ENCODE measurements at regions of chr16 and their contacts with region 1.

Region 1: DNA sequence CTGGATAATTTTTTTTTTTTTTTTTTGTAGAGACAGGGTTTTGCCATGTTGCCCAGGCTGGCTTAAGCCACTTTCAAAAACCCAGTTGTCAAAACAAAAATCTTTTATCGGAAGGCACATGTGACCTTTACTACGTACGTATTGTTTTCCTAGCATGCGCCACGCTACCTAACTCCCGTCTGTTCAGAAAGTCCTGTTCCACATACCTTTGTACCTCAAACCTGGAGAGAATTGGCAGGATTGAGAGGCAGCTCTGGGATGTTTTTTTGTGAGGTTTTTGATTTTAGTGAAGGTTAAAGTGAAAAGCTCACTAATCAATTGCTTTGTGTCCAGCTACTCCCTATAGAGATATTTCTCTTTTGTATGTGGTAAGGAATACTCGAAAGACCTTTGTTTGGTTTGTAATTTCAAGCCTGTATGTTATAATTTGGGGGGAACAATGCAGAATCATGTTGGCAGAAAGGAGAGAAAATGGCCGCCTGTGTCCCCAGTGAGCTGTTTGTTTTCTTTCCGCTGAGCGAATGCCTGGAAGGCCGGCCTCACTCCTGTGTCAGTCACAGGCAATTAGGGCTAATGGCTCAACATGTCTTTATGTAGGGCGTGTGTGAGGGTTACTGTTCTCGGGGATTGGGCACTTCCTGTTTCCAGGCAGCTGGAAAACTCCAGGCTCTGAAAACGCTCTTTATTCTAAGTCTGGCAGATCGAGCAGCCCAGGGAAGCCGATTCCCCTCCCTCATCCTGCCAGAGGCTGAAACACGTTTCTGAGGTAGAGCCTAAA is 60.8 kb upstream of the CLEC18A start:
- DNase-seq: peak; percentile 50 to 95 (median 86)
- H3K4me3 ChIP-seq: peak overlapping the region in 20 of 59 donors; percentile 2 to 35 (median 22)
- H3K27ac ChIP-seq: peak overlapping the region; percentile 91 to 100 (median 98)
- H3K27me3 ChIP-seq: no peaks in the 10 kb centered on the region
- CTCF ChIP-seq: peak in 19 of 56 donors; percentile 5 to 32 (median 19)

Region 2: DNA sequence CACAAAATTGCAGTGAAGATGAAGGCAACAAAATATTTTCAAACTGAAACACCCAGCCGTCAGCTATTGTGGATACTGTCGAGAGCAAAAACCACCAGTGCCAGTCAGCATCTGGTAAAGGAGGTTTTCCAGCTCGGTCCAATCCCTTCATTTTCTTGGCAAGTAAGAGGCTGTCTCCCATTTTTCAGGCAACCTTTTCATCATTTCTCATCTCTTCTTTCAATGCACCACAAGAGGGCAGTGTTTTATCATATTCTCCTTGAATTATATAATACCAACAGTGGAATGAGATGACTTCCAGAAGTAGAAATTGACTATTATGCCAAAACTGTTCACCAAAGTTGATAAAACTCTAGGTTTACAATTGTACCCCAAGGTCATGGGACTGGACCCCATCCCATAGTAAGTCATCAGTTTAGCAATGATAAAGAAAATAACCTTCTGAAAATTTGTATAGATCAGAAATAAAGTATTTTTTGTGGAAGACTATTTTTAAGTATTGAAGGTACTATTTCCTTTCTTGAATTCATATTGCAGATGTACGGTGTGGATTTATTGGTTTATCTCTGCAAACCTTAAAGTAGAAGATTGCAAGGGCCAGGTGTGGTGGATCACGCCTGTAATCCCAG is 180.7 kb before region 1 on chr16:
- intact Hi-C with region 1: no loop called
- DNase-seq: no peak
- H3K4me3 ChIP-seq: peak overlapping the region in 1 of 59 donors; percentile 26
- H3K27ac ChIP-seq: peak overlapping the region in 57 of 59 donors; percentile 1 to 87 (median 72)
- H3K27me3 ChIP-seq: no peaks in the 10 kb centered on the region
- CTCF ChIP-seq: peak; percentile 69 to 93 (median 86)

Region 3: DNA sequence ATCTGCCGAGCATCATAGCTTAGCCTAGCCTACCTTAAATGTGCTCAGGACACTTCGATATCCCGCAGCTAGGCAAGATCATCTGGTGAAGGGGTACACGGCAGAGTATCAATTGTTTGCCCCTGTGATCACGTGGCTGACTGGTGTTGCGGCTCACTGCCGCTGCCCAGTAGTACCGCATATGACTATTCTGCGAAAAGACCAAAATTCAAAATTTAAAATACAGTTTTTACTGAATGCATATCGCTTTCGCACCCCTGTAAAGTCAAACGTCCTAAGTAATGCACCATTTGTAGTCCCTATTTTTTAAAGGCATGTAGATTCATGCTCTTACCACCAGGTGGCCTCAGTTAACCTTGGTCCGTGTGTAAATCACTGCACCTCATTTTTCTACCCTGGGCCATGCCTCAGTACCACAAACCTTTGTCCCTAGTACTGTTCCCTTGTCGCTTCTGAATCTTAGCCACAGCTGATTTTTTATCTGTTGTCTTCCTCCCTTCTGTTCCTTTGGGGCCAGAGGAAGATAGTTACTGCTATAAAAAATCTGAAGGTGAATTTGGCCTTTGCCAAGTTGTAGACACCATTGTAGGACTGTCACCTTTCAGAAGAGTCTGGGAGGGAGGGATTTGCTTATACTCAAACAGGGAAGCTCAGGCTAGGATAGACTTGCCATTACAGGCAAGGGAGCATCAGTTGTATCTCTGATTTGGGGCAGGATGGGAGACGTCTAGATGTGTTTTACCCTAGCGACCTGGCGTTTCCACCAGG is 93.8 kb before region 1 on chr16:
- intact Hi-C with region 1: loop called in 1 of 2 experiments (anchors 1 kb)
- DNase-seq: peak in 3 of 10 donors; percentile 16 to 62 (median 37)
- H3K4me3 ChIP-seq: peak overlapping the region in 57 of 59 donors; percentile 9 to 63 (median 48)
- H3K27ac ChIP-seq: peak overlapping the region in 46 of 59 donors; percentile 0 to 85 (median 46)
- H3K27me3 ChIP-seq: no peaks in the 10 kb centered on the region
- CTCF ChIP-seq: peak; percentile 88 to 100 (median 96)

Region 4: GRCh38 chr16:69839798-69840409 is 50.4 kb before region 1 on chr16:
- intact Hi-C with region 1: loop called (anchors 5 kb)
- DNase-seq: peak; percentile 55 to 90 (median 73)
- H3K4me3 ChIP-seq: peak overlapping the region in 3 of 59 donors; percentile 12 to 24 (median 18)
- H3K27ac ChIP-seq: peak overlapping the region; percentile 61 to 95 (median 88)
- H3K27me3 ChIP-seq: no peaks in the 10 kb centered on the region
- CTCF ChIP-seq: no peak

Region 5: DNA sequence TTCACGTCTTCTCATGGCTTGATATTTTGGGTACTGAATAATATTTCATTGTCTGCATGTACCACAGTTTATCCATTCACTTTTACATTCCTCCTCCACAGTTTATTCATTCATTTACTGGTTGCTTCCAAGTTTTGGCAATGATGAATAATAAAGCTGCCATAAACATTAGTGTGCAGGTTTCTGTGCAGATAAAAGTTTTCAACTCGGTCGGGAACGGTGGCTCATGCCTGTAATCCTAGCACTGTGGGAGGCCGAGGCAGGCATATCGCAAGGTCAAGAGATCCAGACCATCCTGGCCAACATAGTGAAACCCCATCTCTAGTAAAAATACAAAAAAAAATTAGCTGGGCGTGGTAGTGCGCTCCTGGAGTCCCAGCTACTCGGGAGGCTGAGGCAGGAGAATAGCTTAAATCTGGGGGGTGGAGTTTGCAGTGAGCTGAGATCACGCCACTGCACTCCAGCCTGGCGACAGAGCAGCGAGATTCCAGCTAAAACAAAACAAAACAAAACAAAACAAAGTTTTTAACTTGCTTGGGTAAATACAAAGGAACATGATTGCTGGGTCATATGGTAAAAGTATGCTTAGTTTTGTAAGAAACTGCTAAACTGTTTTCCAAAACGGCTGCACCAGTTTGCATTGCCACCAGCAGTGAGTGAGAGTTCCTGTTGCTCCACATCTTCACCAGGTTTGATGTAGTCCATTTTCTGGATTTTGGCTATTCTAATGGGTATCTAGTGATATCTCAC is 38.6 kb before region 1 on chr16:
- intact Hi-C with region 1: loop called in 1 of 2 experiments (anchors 5 kb)
- DNase-seq: no peak
- H3K4me3 ChIP-seq: no peak overlapping the region
- H3K27ac ChIP-seq: peak overlapping the region in 56 of 59 donors; percentile 46 to 95 (median 86)
- H3K27me3 ChIP-seq: no peaks in the 10 kb centered on the region
- CTCF ChIP-seq: no peak

Region 6: DNA sequence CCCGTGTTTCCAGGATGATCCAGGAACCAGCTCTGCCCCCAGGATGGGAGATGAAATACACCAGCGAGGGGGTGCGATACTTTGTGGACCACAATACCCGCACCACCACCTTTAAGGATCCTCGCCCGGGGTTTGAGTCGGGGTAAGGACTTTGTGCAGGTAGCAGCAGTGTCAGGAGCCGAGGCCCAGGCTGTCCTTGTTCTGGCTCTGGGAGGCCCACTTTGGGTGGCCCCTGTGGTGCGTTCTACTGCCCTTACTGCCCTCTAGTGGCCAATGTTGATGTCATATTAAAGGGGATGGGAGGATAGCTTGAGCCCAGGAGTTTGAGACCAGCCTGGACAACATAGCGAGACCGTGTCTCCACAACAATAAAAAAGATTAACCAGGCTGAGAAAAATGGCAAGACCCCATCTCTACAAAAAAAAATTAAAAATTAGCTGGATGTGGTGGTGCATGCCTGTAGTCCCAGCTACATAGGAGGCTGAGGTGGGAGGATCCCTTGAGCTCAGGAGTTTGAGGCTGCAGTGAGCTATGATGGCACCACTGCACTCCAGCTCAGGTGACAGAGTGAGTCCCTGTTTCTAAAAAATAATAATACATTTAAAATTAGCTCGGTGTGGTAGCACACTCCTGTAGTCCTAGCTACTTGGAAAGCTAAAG is 39.9 kb after region 1 on chr16:
- intact Hi-C with region 1: loop called (anchors 2 to 5 kb)
- DNase-seq: peak in 2 of 10 donors; percentile 37 to 46
- H3K4me3 ChIP-seq: no peak overlapping the region
- H3K27ac ChIP-seq: peak overlapping the region in 41 of 59 donors; percentile 7 to 95 (median 58)
- H3K27me3 ChIP-seq: no peaks in the 10 kb centered on the region
- CTCF ChIP-seq: peak; percentile 44 to 84 (median 73)

Measured in dorsolateral prefrontal cortex (tissue), 120 donors.